CD4-positive, alpha-beta memory T cell (primary cell): ENCODE measurements at regions of chr7 and their contacts with region 1.

Region 1: DNA sequence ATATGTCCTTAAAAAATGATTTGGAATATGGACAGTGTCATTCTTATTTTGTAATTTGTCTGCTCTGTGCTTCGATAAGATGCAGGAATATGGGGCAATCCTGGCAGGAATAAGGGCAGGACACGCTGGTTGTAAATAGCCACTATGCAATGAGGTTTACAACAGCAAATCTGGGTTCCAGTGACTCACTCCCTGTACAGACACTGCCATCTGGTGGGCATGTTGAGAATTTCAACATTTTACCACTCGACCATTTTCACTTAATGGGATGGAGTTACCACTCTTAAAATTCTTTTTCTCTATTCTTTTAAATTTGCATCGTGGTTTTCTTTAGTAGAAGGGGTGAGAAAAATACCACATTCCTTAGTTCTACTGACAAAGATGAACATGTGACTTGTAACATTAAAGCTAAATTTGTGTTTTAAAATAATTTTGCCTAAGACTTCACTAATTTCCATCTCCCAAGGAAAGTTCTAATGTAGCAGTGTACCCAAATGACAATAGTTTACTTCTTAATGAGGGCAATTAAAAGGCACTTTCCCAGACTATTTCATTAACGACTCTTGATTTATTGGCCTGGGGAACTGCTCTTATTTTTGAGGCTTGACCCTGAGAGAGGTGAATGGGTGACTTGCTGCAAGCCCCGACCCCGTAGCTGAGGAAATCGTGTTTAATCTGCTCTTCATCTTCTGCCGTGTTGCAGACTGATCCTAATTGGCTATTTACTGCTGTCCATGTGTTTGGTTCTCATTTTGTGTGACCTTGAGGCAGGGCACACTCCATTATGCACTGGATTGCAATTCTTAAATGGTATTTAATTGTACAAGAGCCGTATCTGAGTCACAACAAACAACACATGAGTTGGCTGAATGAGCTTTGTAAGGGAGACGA is 173.6 kb upstream of the IMMP2L start:
- DNase-seq: peak; percentile 42 to 62 (median 50)
- H3K4me3 ChIP-seq: no peak overlapping the region
- H3K4me3 Mint-ChIP-seq: no peak overlapping the region
- H3K27ac ChIP-seq: no peak overlapping the region
- H3K27ac Mint-ChIP-seq: no peak overlapping the region
- H3K4me1 ChIP-seq: no peaks in the 10 kb centered on the region
- H3K4me1 Mint-ChIP-seq: no peaks in the 10 kb centered on the region
- H3K27me3 ChIP-seq: no peaks in the 10 kb centered on the region
- H3K27me3 Mint-ChIP-seq: peaks cover 7 to 10% of the 10 kb centered on the region in 2 donors

Region 2: GRCh38 chr7:110590415-110590814 is 1145.5 kb before region 1 on chr7:
- CTCF ChIA-PET with region 1: no interaction called
- POLR2A ChIA-PET with region 1: no interaction called
- intact Hi-C with region 1: loop called (anchors 2 kb)
- DNase-seq: no peak
- H3K4me3 ChIP-seq: no peak overlapping the region
- H3K4me3 Mint-ChIP-seq: no peak overlapping the region
- H3K27ac ChIP-seq: no peak overlapping the region
- H3K27ac Mint-ChIP-seq: no peak overlapping the region
- H3K4me1 ChIP-seq: no peaks in the 10 kb centered on the region
- H3K4me1 Mint-ChIP-seq: peaks cover 0 to 1% (median 0%) of the 10 kb centered on the region in 4 donors
- H3K27me3 ChIP-seq: no peaks in the 10 kb centered on the region
- H3K27me3 Mint-ChIP-seq: no peaks in the 10 kb centered on the region

Region 3: DNA sequence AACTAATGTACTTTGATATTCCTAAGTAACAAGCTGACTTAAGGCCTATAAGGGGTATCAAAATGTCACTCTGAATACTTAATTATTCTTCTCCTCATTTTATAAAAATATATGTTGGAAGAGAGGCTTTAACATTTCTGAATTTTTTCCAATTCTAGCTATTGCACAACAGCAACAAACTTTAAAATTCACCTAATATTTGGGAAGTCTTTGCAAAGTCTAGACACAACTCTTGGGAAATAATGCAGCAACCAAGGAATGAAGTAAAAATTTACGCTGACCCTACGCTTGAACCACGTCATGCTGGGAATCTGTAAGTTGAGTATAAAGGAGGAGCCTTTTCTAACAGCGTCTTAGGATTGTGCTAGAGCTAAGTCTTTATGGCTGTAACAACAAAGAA is 70.3 kb after region 1 on chr7:
- CTCF ChIA-PET with region 1: no interaction called
- POLR2A ChIA-PET with region 1: no interaction called
- intact Hi-C with region 1: no loop called
- DNase-seq: no peak
- H3K4me3 ChIP-seq: no peak overlapping the region
- H3K4me3 Mint-ChIP-seq: no peak overlapping the region
- H3K27ac ChIP-seq: no peak overlapping the region
- H3K27ac Mint-ChIP-seq: no peak overlapping the region
- H3K4me1 ChIP-seq: no peaks in the 10 kb centered on the region
- H3K4me1 Mint-ChIP-seq: no peaks in the 10 kb centered on the region
- H3K27me3 ChIP-seq: no peaks in the 10 kb centered on the region
- H3K27me3 Mint-ChIP-seq: peaks cover 0 to 2% of the 10 kb centered on the region in 2 donors

Region 4: GRCh38 chr7:111873963-111874690 is 138.2 kb after region 1 on chr7:
- CTCF ChIA-PET with region 1: no interaction called
- POLR2A ChIA-PET with region 1: no interaction called
- intact Hi-C with region 1: no loop called
- DNase-seq: no peak
- H3K4me3 ChIP-seq: no peak overlapping the region
- H3K4me3 Mint-ChIP-seq: no peak overlapping the region
- H3K27ac ChIP-seq: no peak overlapping the region
- H3K27ac Mint-ChIP-seq: no peak overlapping the region
- H3K4me1 ChIP-seq: no peaks in the 10 kb centered on the region
- H3K4me1 Mint-ChIP-seq: no peaks in the 10 kb centered on the region
- H3K27me3 ChIP-seq: no peaks in the 10 kb centered on the region
- H3K27me3 Mint-ChIP-seq: peaks cover 2 to 5% of the 10 kb centered on the region in 2 donors